GM23248 (cell line): ENCODE measurements at regions of chr12 and their contacts with region 1.

Region 1: DNA sequence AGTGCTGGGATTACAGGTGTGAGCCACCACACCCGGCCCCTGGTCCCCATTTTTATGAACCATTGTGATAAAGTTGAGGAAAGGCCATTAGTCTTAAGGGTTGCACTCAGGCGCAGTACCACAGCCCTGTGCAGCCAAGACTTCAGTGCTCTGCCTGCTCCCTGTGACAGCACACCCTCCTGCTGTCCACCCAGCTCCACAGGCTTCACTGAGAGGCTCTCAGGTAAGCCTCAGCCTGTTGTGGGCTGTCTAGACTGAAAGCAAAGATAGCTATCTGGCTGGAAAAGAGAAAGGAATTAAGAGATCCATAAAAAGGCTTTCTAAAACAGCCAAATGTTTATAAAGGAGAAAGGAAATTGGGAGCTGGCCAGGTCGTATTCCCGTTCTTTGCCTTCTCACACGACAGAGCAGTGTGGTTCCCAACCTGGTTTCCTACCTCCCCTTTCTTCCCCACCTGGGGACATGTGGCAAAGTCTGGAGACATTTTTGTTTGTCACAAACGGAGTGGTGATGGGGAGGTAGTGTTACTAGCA is 19.1 kb upstream of the DNM1L start:
- DNase-seq: no peak
- H3K4me3 ChIP-seq: no peak overlapping the region
- H3K27ac ChIP-seq: peak overlapping the region; percentile 21; the same call in 1 of the 2 replicates
- H3K4me1 ChIP-seq: peaks cover 4% of the 10 kb centered on the region; the same call in 1 of the 2 replicates
- H3K27me3 ChIP-seq: no peaks in the 10 kb centered on the region

Region 2: DNA sequence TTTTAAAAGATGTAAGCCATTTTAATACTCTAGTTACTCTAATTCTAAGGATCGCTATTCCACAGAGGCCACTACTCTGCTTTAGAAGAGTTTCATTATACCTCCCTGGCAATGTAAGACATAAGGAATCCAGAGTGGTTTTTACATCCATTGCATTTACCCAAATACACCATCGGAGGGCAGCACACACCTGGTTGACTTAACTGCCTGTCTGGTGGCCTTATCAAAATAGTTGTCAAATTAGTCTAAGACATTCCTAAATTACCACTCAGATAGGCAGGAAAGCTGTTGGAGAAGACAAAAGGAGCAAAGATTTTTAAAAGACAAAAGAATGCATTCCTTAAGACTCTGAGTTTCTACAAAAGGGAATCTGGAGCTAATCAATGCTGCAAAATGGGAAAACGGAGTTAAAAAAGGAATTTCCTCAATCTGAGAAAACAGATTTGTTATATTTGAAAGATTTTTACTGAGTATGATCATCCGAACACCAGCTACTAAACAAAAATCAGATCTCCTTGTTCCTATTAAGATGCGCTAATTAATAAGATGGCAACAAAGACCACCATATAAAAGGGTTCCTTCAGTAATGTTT is 294.4 kb before region 1 on chr12:
- in situ Hi-C with region 1: loop called (anchors 10 kb)
- DNase-seq: peak; percentile 78
- H3K4me3 ChIP-seq: no peak overlapping the region
- H3K27ac ChIP-seq: no peak overlapping the region
- H3K4me1 ChIP-seq: peaks cover 5% of the 10 kb centered on the region
- H3K27me3 ChIP-seq: no peaks in the 10 kb centered on the region

Region 3: DNA sequence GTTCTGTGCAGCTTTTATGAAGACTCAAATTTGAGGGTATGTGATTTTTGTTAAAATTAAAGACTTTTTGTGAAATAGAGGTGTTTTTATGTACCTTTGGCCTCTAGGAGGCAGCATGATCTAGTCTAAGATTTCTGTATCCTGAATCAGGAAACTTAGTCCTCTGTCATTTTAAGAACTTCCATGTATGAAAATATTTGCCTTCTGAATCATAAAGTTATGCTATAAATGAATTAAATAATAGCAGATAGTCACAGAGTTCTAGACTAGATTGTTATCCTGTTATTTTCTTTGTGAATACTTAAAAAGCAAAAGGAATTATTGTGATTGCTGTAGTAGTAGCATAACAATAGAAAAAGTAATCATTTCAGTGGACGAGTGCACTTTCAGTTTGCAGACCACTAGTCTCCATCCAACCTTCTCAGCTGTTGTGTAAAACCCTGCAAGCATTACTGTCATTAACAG is 204.3 kb before region 1 on chr12:
- in situ Hi-C with region 1: loop called (anchors 5 kb)
- DNase-seq: peak; percentile 88
- H3K4me3 ChIP-seq: peak overlapping the region; percentile 68
- H3K27ac ChIP-seq: no peak overlapping the region
- H3K4me1 ChIP-seq: peaks cover 29% of the 10 kb centered on the region
- H3K27me3 ChIP-seq: no peaks in the 10 kb centered on the region

Region 4: GRCh38 chr12:33551006-33551405 is 891.0 kb after region 1 on chr12:
- in situ Hi-C with region 1: no loop called
- DNase-seq: no peak
- H3K4me3 ChIP-seq: no peak overlapping the region
- H3K27ac ChIP-seq: no peak overlapping the region
- H3K4me1 ChIP-seq: no peaks in the 10 kb centered on the region
- H3K27me3 ChIP-seq: no peaks in the 10 kb centered on the region